Sigmoid colon (tissue), 7 donors: ENCODE measurements at regions of chr15 and their contacts with region 1.

Region 1: GRCh38 chr15:42595626-42596240 is 20.3 kb downstream of the STARD9 start:
- DNase-seq: no peak
- H3K4me3 ChIP-seq: no peak overlapping the region
- H3K27ac ChIP-seq: peak overlapping the region; percentile 64 to 82 (median 72)
- H3K4me1 ChIP-seq: peaks cover 0 to 84% (median 60%) of the 10 kb centered on the region in 4 donors
- H3K27me3 ChIP-seq: no peaks in the 10 kb centered on the region
- CTCF ChIP-seq: no peak
- EP300 ChIP-seq: no peak
- POLR2A ChIP-seq: no peak

Region 2: GRCh38 chr15:42632105-42632675 is 36.5 kb after region 1 on chr15:
- intact Hi-C with region 1: loop called (anchors 5 kb)
- DNase-seq: no peak
- H3K4me3 ChIP-seq: no peak overlapping the region
- H3K27ac ChIP-seq: no peak overlapping the region
- H3K4me1 ChIP-seq: peaks cover 0 to 3% (median 0%) of the 10 kb centered on the region in 4 donors
- H3K27me3 ChIP-seq: no peaks in the 10 kb centered on the region
- CTCF ChIP-seq: no peak
- EP300 ChIP-seq: no peak
- POLR2A ChIP-seq: no peak

Region 3: GRCh38 chr15:42691308-42691707 is 95.6 kb after region 1 on chr15:
- intact Hi-C with region 1: no loop called
- DNase-seq: no peak
- H3K4me3 ChIP-seq: no peak overlapping the region
- H3K27ac ChIP-seq: no peak overlapping the region
- H3K4me1 ChIP-seq: no peaks in the 10 kb centered on the region
- H3K27me3 ChIP-seq: no peaks in the 10 kb centered on the region
- CTCF ChIP-seq: no peak
- EP300 ChIP-seq: no peak
- POLR2A ChIP-seq: no peak